CD8-positive, alpha-beta T cell (primary cell): ENCODE measurements at regions of chr2 and their contacts with region 1.

Region 1: GRCh38 chr2:43611987-43612894 is 16.4 kb upstream of the THADA start:
- DNase-seq: peak; percentile 52 to 81 (median 72)
- ATAC-seq: peak; percentile 99
- H3K4me3 ChIP-seq: no peak overlapping the region
- H3K4me3 Mint-ChIP-seq: no peak overlapping the region
- H3K27ac ChIP-seq: no peak overlapping the region
- H3K27ac Mint-ChIP-seq: no peak overlapping the region
- H3K4me1 ChIP-seq: no peaks in the 10 kb centered on the region
- H3K4me1 Mint-ChIP-seq: no peaks in the 10 kb centered on the region
- H3K27me3 ChIP-seq: no peaks in the 10 kb centered on the region
- H3K27me3 Mint-ChIP-seq: peaks cover 7% of the 10 kb centered on the region
- CTCF ChIP-seq: peak; percentile 74

Region 2: GRCh38 chr2:43426305-43427031 is 185.8 kb before region 1 on chr2:
- CTCF ChIA-PET with region 1: no interaction called
- POLR2A ChIA-PET with region 1: no interaction called
- intact Hi-C with region 1: no loop called
- DNase-seq: peak; percentile 9 to 77 (median 66)
- ATAC-seq: peak; percentile 95
- H3K4me3 ChIP-seq: no peak overlapping the region
- H3K4me3 Mint-ChIP-seq: no peak overlapping the region
- H3K27ac ChIP-seq: peak overlapping the region; percentile 27 to 75
- H3K27ac Mint-ChIP-seq: peak overlapping the region; percentile 76
- H3K4me1 ChIP-seq: peaks cover 31% of the 10 kb centered on the region
- H3K4me1 Mint-ChIP-seq: peaks cover 40% of the 10 kb centered on the region
- H3K27me3 ChIP-seq: no peaks in the 10 kb centered on the region
- H3K27me3 Mint-ChIP-seq: no peaks in the 10 kb centered on the region
- CTCF ChIP-seq: no peak

Region 3: GRCh38 chr2:43648994-43649701 is 36.9 kb after region 1 on chr2:
- CTCF ChIA-PET with region 1: no interaction called
- POLR2A ChIA-PET with region 1: no interaction called
- intact Hi-C with region 1: no loop called
- DNase-seq: no peak
- ATAC-seq: no peak
- H3K4me3 ChIP-seq: no peak overlapping the region
- H3K4me3 Mint-ChIP-seq: no peak overlapping the region
- H3K27ac ChIP-seq: no peak overlapping the region
- H3K27ac Mint-ChIP-seq: no peak overlapping the region
- H3K4me1 ChIP-seq: no peaks in the 10 kb centered on the region
- H3K4me1 Mint-ChIP-seq: no peaks in the 10 kb centered on the region
- H3K27me3 ChIP-seq: no peaks in the 10 kb centered on the region
- H3K27me3 Mint-ChIP-seq: peaks cover 16% of the 10 kb centered on the region
- CTCF ChIP-seq: no peak

Region 4: DNA sequence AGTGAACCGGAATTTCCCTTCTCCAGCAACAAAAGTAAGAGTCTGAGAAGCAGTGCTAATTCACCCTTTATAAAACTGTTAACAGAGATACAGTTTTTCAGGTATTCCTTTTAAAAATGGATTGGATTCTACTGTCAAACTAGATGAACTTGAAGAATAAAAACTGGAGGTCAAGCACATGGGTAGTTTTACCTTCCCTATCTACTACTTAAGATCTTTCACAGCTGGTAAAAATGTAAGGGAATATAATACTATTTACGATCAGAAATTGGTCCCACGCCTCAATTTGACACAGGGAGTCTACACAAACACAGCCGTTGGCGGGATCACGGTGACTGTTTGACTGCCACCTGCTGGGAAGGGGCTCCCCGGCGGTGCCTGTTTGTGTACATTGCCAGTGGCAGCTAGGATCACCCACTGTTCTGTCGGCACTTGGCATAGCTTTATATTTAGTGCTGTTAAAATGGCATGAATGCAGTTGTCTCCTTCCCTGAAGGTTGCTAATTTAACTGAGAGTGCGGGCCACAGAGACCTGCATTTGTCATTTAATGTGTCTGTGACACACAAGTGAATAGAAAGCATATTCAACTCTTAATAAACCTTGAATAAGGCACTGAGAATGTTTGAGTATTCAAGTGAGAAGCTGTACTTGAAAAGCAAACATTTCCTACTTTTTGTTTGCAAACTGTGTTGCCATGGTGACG is 286.0 kb after region 1 on chr2:
- CTCF ChIA-PET with region 1: no interaction called
- POLR2A ChIA-PET with region 1: no interaction called
- intact Hi-C with region 1: loop called in 1 of 2 experiments (anchors 10 kb)
- DNase-seq: peak in 1 of 9 experiments; percentile 15
- ATAC-seq: no peak
- H3K4me3 ChIP-seq: no peak overlapping the region
- H3K4me3 Mint-ChIP-seq: no peak overlapping the region
- H3K27ac ChIP-seq: no peak overlapping the region
- H3K27ac Mint-ChIP-seq: no peak overlapping the region
- H3K4me1 ChIP-seq: no peaks in the 10 kb centered on the region
- H3K4me1 Mint-ChIP-seq: no peaks in the 10 kb centered on the region
- H3K27me3 ChIP-seq: no peaks in the 10 kb centered on the region
- H3K27me3 Mint-ChIP-seq: no peaks in the 10 kb centered on the region
- CTCF ChIP-seq: no peak